Left ventricle myocardium superior (tissue), 1 donor: ENCODE measurements at regions of chr9 and their contacts with region 1.

Region 1: GRCh38 chr9:94065535-94065961 is 18.7 kb upstream of the PTPDC1 start:
- DNase-seq: peak; percentile 72
- ATAC-seq: peak; percentile 87

Region 2: GRCh38 chr9:93600504-93600903 is 465.0 kb before region 1 on chr9:
- intact Hi-C with region 1: no loop called
- DNase-seq: no peak
- ATAC-seq: no peak

Region 3: GRCh38 chr9:93930070-93930469 is 135.5 kb before region 1 on chr9:
- intact Hi-C with region 1: no loop called
- DNase-seq: no peak
- ATAC-seq: no peak

Region 4: DNA sequence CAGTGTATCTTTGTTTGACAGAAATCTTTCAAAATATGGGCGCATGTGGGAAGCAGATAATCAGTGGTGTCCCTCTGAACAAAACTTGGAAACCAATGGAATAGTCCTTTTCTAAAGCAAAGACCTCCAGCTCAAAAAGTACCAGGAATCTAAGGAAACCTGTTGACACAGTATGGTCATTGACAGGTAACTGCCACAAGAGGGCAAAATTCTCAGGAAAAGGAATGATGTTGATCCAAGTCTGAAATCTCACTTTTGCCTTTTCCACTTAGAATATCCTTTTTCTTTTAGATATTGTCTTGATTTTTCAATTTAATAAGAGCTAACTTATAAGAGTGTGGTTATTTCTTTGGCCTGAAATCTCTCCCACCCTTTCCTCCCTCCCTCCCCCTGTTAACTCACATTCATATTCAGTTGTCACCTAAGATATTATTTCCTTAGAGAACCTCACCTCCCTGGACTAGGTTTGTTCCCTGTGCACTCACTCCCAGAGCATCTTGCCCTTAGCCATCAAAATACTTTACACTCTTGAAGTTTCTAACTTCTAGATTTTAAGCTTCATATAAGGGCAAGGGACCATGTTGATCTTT is 51.4 kb before region 1 on chr9:
- intact Hi-C with region 1: no loop called
- DNase-seq: no peak
- ATAC-seq: peak; percentile 31

Region 5: DNA sequence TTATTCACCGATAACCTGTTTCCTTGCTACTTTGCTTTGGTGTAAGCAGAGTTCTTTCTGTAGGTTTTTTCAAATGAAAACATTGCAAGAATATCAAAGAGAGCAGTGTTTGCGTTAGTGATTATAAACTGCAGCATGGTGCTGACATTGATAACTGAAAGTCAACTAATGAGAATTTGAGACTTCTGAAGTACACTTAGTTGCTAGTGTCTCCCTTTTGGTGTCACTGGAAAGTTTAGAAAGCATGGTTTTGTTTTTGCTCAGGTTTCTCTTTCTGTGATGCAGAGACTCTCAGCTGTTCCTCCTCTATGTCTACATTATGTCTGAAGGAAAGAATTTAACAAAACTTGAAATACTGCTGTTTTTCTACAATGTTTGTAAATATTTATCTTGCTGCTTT is 113.4 kb after region 1 on chr9:
- intact Hi-C with region 1: no loop called
- DNase-seq: no peak
- ATAC-seq: no peak

Region 6: DNA sequence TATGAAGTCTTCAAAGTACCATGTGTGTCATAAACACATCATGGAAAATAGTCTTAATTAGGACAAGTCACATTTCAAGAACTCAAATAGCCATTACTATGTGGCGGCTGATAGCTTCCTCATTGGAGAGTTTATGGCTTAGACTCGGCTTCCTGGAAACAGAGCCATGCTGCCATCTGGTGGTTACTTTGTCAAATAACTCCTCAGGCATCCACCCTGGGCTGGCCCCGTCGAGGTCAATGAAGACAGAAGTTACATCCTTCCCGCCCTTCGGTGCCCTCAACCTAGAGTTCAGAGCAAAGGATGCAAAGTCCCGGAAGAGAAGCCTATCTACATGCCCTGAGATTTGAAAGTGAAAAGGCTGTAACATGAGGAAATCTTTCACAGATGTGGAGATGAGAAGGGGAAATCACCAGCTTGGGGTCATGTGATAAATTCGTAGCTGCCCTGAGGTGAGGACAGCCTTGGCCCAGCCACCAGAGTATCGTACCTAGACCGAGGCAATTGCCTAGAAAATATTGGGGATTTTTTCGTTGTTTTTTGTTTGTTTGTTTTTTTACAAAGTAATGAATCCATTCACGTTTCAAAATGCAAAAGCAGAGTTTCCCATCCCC is 148.1 kb after region 1 on chr9:
- intact Hi-C with region 1: loop called (anchors 1 kb)
- DNase-seq: peak; percentile 55
- ATAC-seq: peak; percentile 96